ENCODE measurements at regions of chr13 and their contacts with region 1.

Region 1: DNA sequence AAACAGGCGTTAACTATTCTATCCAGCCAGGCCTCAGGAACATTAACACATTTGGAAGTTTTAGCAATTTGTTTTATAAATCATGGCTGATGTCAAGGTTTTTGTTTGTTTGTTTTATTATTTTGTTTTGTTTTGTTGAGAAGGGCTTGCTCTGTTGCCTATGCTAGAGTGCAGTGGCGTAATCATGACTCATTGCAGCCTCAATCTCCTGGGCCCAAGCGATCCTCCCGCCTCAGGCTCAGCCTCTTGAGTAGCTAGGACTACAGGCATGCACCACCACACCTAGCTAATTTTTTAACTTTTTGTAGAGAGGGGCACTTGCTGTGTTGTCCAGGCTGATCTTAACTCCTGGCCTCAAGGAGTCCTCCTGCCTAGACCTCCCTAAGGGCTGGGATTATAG is 28.3 kb downstream of the NUP58 start:
- DNase-seq: no peak
- ATAC-seq: no peak
- H3K4me3 ChIP-seq: no peak overlapping the region
- H3K4me3 Mint-ChIP-seq: no peak overlapping the region
- H3K27ac ChIP-seq: no peak overlapping the region
- H3K27ac Mint-ChIP-seq: no peak overlapping the region
- H3K4me1 ChIP-seq: no peaks in the 10 kb centered on the region
- H3K4me1 Mint-ChIP-seq: peaks cover 7% of the 10 kb centered on the region
- H3K27me3 ChIP-seq: no peaks in the 10 kb centered on the region
- H3K27me3 Mint-ChIP-seq: no peaks in the 10 kb centered on the region
- CTCF ChIP-seq: no peak

Region 2: GRCh38 chr13:25085125-25085742 is 244.5 kb before region 1 on chr13:
- CTCF ChIA-PET with region 1: no interaction called
- POLR2A ChIA-PET with region 1: no interaction called
- intact Hi-C with region 1: no loop called
- DNase-seq: peak in 2 of 14 experiments; percentile 3
- ATAC-seq: no peak
- H3K4me3 ChIP-seq: no peak overlapping the region
- H3K4me3 Mint-ChIP-seq: no peak overlapping the region
- H3K27ac ChIP-seq: no peak overlapping the region
- H3K27ac Mint-ChIP-seq: no peak overlapping the region
- H3K4me1 ChIP-seq: no peaks in the 10 kb centered on the region
- H3K4me1 Mint-ChIP-seq: no peaks in the 10 kb centered on the region
- H3K27me3 ChIP-seq: no peaks in the 10 kb centered on the region
- H3K27me3 Mint-ChIP-seq: peaks cover 11% of the 10 kb centered on the region
- CTCF ChIP-seq: no peak

Region 3: DNA sequence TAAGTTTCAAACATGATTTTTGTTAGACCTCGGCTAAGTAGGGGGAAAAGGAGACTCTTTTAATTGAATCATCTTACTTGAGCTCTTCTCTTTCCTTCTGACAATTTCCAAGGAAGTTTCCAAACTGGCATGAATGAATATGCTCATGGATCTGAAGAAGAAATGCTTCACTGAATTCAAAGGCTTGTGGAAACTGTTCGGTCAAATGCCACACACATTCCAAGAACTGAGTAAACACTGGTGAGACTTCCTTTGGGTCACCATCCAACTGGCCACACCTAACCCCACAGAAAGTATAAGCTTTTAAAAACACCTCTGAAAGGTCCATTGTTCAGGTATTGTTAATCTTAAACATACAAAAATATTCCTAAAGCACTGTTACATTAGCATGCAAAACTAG is 76.0 kb before region 1 on chr13:
- CTCF ChIA-PET with region 1: no interaction called
- POLR2A ChIA-PET with region 1: no interaction called
- intact Hi-C with region 1: loop called in 1 of 2 experiments (anchors 5 kb)
- DNase-seq: no peak
- ATAC-seq: no peak
- H3K4me3 ChIP-seq: no peak overlapping the region
- H3K4me3 Mint-ChIP-seq: no peak overlapping the region
- H3K27ac ChIP-seq: no peak overlapping the region
- H3K27ac Mint-ChIP-seq: no peak overlapping the region
- H3K4me1 ChIP-seq: no peaks in the 10 kb centered on the region
- H3K4me1 Mint-ChIP-seq: no peaks in the 10 kb centered on the region
- H3K27me3 ChIP-seq: no peaks in the 10 kb centered on the region
- H3K27me3 Mint-ChIP-seq: no peaks in the 10 kb centered on the region
- CTCF ChIP-seq: no peak

Region 4: GRCh38 chr13:25267715-25268114 is 62.0 kb before region 1 on chr13:
- CTCF ChIA-PET with region 1: no interaction called
- POLR2A ChIA-PET with region 1: no interaction called
- intact Hi-C with region 1: loop called in 1 of 2 experiments (anchors 10 kb)
- DNase-seq: peak in 3 of 14 experiments; percentile 32 to 51 (median 46)
- ATAC-seq: peak; percentile 84
- H3K4me3 ChIP-seq: no peak overlapping the region
- H3K4me3 Mint-ChIP-seq: no peak overlapping the region
- H3K27ac ChIP-seq: no peak overlapping the region
- H3K27ac Mint-ChIP-seq: peak overlapping the region; percentile 13
- H3K4me1 ChIP-seq: peaks cover 2% of the 10 kb centered on the region
- H3K4me1 Mint-ChIP-seq: peaks cover 22% of the 10 kb centered on the region
- H3K27me3 ChIP-seq: no peaks in the 10 kb centered on the region
- H3K27me3 Mint-ChIP-seq: no peaks in the 10 kb centered on the region
- CTCF ChIP-seq: peak; percentile 19

Measured in CD4-positive, alpha-beta T cell (primary cell).